ENCODE measurements at regions of chr2 and their contacts with region 1.

Region 1: DNA sequence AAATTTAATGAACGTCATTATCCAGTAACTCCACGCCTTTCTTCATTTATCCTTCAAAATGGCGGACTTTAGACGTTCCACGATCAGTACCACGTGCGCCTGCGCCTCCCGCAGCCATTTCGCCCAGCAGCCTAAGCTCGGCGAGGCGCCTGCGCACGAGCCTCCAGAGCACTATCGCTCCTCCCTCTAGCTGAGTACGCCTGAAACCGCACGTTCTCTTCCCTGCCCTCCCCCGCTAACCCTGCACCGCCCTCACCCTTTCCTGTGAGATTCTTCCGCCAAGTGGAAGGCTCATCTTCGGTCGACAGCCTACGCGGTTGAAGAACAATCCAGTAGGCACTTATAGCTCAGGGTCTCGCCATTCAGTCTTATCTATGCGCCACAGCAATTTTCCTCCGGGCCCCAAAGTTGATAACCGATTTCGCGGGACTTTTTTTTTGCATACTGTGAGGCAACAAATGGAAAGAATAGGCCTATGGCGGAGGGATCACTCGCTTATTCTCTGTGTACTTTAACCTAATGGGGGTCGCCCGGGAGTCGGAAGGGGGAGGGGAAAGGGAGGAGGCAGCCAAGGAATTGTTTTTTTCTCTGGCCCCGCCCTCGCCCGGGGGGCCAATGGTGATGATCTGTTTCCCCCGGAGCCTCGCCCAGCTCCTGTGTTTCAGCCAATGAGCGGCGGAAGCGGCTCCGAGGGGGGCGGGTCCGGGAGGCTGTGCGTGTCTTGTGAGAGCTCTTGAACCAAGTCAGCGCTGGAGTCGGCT is at the start of gene KDM3A:
- DNase-seq: peak; percentile 100
- H3K4me3 ChIP-seq: peak within 1 kb of the TSS; percentile 71 to 97 (median 77)
- H3K27ac ChIP-seq: peak within 1 kb of the TSS; percentile 98
- H3K4me1 ChIP-seq: peaks cover 16% of the 10 kb centered on the region
- H3K27me3 ChIP-seq: no peaks in the 10 kb centered on the region
- CTCF ChIP-seq: no peak
- total RNA-seq, gene KDM3A: 20.0 to 29.5 TPM

Region 2: GRCh38 chr2:85988175-85988913 is 452.5 kb before region 1 on chr2:
- CTCF ChIA-PET with region 1: no interaction called
- dilution Hi-C with region 1: no loop called
- in situ Hi-C with region 1: no loop called
- intact Hi-C with region 1: no loop called
- DNase-seq: no peak
- H3K4me3 ChIP-seq: no peak overlapping the region
- H3K27ac ChIP-seq: no peak overlapping the region
- H3K4me1 ChIP-seq: no peaks in the 10 kb centered on the region
- H3K27me3 ChIP-seq: no peaks in the 10 kb centered on the region
- CTCF ChIP-seq: no peak

Region 3: GRCh38 chr2:86195055-86195807 is 245.6 kb before region 1 on chr2 and contains the start of gene IMMT:
- CTCF ChIA-PET with region 1: no interaction called
- dilution Hi-C with region 1: no loop called
- in situ Hi-C with region 1: no loop called
- intact Hi-C with region 1: loop called (anchors 2 kb)
- DNase-seq: peak; percentile 95
- H3K4me3 ChIP-seq: peak within 1 kb of the TSS; percentile 63 to 99 (median 81)
- H3K27ac ChIP-seq: peak within 1 kb of the TSS; percentile 91
- H3K4me1 ChIP-seq: peaks cover 13% of the 10 kb centered on the region
- H3K27me3 ChIP-seq: no peaks in the 10 kb centered on the region
- CTCF ChIP-seq: no peak
- total RNA-seq, gene IMMT: 78.9 to 102 TPM

Region 4: GRCh38 chr2:86221066-86221684 is 219.6 kb before region 1 on chr2:
- CTCF ChIA-PET with region 1: no interaction called
- dilution Hi-C with region 1: no loop called
- in situ Hi-C with region 1: no loop called
- intact Hi-C with region 1: loop called (anchors 10 kb)
- DNase-seq: peak; percentile 32
- H3K4me3 ChIP-seq: no peak overlapping the region
- H3K27ac ChIP-seq: no peak overlapping the region
- H3K4me1 ChIP-seq: no peaks in the 10 kb centered on the region
- H3K27me3 ChIP-seq: no peaks in the 10 kb centered on the region
- CTCF ChIP-seq: peak; percentile 58 to 81

Region 5: DNA sequence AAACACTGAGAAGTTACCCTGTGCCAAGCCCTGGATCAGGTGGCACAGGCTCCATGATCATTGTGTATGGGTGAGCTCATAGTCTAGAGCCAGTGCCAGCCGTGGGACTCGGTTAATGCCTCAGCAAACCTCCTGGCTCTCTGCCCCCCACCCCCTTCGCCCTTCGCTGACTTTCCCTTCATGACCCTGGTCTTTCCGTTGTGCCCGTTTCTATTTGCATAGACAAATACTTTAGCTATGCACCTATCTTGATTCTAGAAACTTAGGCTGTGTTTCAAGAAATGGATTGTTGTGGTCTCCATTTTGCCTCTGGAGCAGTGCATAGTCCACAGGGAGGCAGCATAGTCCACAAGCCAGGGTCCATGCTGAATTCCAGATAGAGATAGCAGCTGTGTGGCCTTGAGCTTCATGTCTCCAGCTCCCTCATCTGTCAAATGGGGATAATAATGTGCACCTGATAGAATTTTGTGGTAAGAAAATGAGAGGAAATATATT is 44.5 kb before region 1 on chr2:
- CTCF ChIA-PET with region 1: interaction called, 12 read pairs
- dilution Hi-C with region 1: loop called (anchors 5 kb)
- in situ Hi-C with region 1: no loop called
- intact Hi-C with region 1: loop called (anchors 1 kb)
- DNase-seq: peak; percentile 30
- H3K4me3 ChIP-seq: no peak overlapping the region
- H3K27ac ChIP-seq: no peak overlapping the region
- H3K4me1 ChIP-seq: peaks cover 13% of the 10 kb centered on the region
- H3K27me3 ChIP-seq: no peaks in the 10 kb centered on the region
- CTCF ChIP-seq: peak; percentile 66 to 86

Region 6: DNA sequence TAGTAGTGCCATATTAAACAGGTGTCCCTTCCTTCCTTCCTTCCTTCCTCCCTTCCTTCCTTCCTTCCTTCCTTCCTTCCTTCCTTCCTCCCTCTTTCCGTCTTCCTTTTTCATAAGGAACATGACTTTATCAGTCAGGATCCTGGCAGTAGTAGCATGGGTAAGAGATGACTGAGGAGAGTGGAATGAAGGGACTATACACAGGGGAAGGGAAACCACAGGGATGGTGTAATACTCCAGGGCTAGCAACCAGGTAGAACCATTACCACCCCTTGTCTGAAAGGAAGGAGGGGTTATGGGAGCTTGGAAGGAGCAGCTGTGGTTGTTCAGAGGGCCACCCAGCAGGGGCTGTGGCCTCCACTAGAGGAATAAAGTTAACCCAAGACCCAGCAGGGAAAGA is 22.9 kb before region 1 on chr2:
- CTCF ChIA-PET with region 1: interaction called, 3 read pairs
- dilution Hi-C with region 1: no loop called
- in situ Hi-C with region 1: no loop called
- intact Hi-C with region 1: loop called (anchors 1 kb)
- DNase-seq: peak; percentile 87
- H3K4me3 ChIP-seq: no peak overlapping the region
- H3K27ac ChIP-seq: no peak overlapping the region
- H3K4me1 ChIP-seq: peaks cover 4% of the 10 kb centered on the region
- H3K27me3 ChIP-seq: no peaks in the 10 kb centered on the region
- CTCF ChIP-seq: no peak

Region 7: DNA sequence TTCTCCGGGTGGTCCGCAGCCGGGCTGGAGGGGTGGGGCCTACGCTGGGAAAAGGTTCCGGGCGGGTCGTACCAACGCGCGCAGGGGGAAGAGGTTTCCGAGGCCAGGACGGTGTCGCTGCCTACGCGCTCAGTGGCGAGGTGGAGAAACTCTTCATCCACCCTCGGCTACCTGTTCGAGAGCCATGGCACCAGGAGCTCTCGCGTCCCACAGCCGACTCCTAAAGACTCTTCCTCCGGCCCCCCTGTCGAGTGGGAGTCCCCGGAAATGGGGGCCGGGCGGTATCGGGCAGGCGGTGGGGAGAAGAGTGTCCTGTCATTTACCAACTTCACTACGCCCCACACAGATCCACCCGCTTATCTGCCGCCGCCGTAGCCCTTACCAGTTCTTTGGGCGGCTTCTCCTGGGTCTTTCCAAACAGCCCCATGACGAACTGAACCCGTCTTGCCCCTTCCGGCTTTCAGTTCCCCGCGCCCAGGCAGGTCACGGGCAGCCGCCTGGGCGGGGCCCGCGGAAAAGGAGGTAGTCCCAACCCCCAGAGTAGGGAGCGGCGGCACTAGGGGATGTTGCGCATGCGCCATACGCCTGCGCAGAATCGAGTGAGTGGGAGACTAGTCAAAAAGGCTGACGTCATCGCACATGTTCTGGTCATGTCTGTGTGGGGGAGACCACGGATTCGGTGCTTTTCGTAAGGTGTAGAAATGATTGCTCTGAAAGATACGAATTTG is 122.3 kb after region 1 on chr2 and contains the start of gene CHMP3:
- CTCF ChIA-PET with region 1: interaction called, 4 read pairs
- dilution Hi-C with region 1: no loop called
- in situ Hi-C with region 1: no loop called
- intact Hi-C with region 1: loop called (anchors 2 kb)
- DNase-seq: peak; percentile 97
- H3K4me3 ChIP-seq: peak within 1 kb of the TSS; percentile 87 to 96 (median 94)
- H3K27ac ChIP-seq: peak within 1 kb of the TSS; percentile 97
- H3K4me1 ChIP-seq: peaks cover 12% of the 10 kb centered on the region
- H3K27me3 ChIP-seq: no peaks in the 10 kb centered on the region
- CTCF ChIP-seq: no peak
- total RNA-seq, gene CHMP3: 73.0 to 143 TPM